ENCODE measurements at regions of chr6 and their contacts with region 1.

Region 1: DNA sequence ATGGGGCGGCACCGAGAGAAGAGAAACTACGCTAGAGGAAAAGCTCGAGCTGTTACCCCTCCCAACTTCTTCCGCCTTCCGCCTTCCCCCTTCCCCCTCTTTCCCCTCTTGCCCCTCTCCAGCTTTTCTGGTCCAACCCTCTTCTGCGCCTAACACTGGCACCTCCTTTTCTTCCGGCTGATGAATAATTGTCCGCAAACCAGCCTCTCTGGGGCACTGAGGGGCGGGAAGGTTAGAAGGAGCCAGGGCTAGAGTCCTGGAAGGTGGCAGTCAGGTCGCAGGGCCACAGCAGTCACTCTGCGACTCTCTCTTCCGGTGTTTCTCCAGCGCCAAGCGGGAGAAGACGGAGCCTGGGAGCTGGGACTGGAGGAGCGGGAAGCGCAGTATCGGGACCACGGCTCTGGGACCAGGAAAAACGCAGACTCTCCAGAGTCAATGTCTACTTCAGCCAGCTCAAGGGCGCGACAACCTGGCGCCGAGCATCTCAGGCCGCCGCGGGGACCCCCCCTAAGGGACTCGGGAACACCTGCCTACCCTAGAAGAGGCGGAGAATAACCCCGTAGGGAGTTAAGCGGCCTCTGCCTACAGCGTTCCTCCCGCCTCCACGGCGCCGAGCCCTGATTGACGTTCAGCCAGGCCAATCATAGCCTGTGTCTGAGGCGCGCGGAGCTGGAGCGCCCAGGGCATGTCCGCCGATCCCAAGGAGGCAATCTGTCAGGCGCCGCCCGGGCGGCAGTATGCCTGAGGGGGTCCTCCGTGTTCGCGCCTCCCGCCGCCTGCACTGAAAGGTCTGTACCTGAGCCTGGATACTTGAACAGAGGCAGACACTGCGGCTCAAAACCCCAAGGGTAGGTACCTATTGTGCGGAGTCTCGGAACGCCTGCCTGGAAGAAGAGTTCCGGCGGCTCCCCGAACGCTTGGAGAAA is 40.4 kb downstream of the PSMB9 start:
- DNase-seq: peak; percentile 88 to 97 (median 94)
- ATAC-seq: peak; percentile 98
- H3K4me3 ChIP-seq: peak overlapping the region; percentile 89
- H3K4me3 Mint-ChIP-seq: peak overlapping the region; percentile 100
- H3K27ac ChIP-seq: peak overlapping the region; percentile 75 to 85
- H3K27ac Mint-ChIP-seq: peak overlapping the region; percentile 91
- H3K4me1 ChIP-seq: peaks cover 22% of the 10 kb centered on the region
- H3K4me1 Mint-ChIP-seq: peaks cover 45% of the 10 kb centered on the region
- H3K27me3 ChIP-seq: no peaks in the 10 kb centered on the region
- H3K27me3 Mint-ChIP-seq: no peaks in the 10 kb centered on the region
- CTCF ChIP-seq: no peak

Region 2: GRCh38 chr6:32838114-32838958 is 56.0 kb before region 1 on chr6 and contains the start of gene TAP2:
- CTCF ChIA-PET with region 1: interaction called, 8 read pairs
- POLR2A ChIA-PET with region 1: interaction called, 13 read pairs
- intact Hi-C with region 1: no loop called
- DNase-seq: peak; percentile 93 to 99 (median 98)
- ATAC-seq: peak; percentile 86
- H3K4me3 ChIP-seq: peak within 1 kb of the TSS; percentile 77
- H3K4me3 Mint-ChIP-seq: peak within 1 kb of the TSS; percentile 97
- H3K27ac ChIP-seq: peak within 1 kb of the TSS; percentile 76 to 87
- H3K27ac Mint-ChIP-seq: peak within 1 kb of the TSS; percentile 99
- H3K4me1 ChIP-seq: peaks cover 67% of the 10 kb centered on the region
- H3K4me1 Mint-ChIP-seq: peaks cover 94% of the 10 kb centered on the region
- H3K27me3 ChIP-seq: no peaks in the 10 kb centered on the region
- H3K27me3 Mint-ChIP-seq: no peaks in the 10 kb centered on the region
- CTCF ChIP-seq: peak; percentile 93
- total RNA-seq, gene TAP2: 165 to 171 TPM

Region 3: GRCh38 chr6:32853541-32854375 is 40.6 kb before region 1 on chr6 and contains the starts of genes PSMB9 and TAP1:
- CTCF ChIA-PET with region 1: no interaction called
- POLR2A ChIA-PET with region 1: interaction called, 11 read pairs
- intact Hi-C with region 1: no loop called
- DNase-seq: peak; percentile 88 to 98 (median 94)
- ATAC-seq: peak; percentile 81
- H3K4me3 ChIP-seq: peak within 1 kb of the TSS; percentile 94
- H3K4me3 Mint-ChIP-seq: peak within 1 kb of the TSS; percentile 98
- H3K27ac ChIP-seq: peak within 1 kb of the TSS; percentile 98 to 100
- H3K27ac Mint-ChIP-seq: peak within 1 kb of the TSS; percentile 99
- H3K4me1 ChIP-seq: peaks cover 77% of the 10 kb centered on the region
- H3K4me1 Mint-ChIP-seq: peaks cover 86% of the 10 kb centered on the region
- H3K27me3 ChIP-seq: no peaks in the 10 kb centered on the region
- H3K27me3 Mint-ChIP-seq: no peaks in the 10 kb centered on the region
- CTCF ChIP-seq: peak; percentile 97
- total RNA-seq, gene PSMB9: 37.2 to 38.4 TPM
- total RNA-seq, gene TAP1: 91.5 to 93.9 TPM

Region 4: GRCh38 chr6:32908897-32909296 is 14.6 kb after region 1 on chr6:
- CTCF ChIA-PET with region 1: no interaction called
- POLR2A ChIA-PET with region 1: no interaction called
- intact Hi-C with region 1: no loop called
- DNase-seq: no peak
- ATAC-seq: no peak
- H3K4me3 ChIP-seq: no peak overlapping the region
- H3K4me3 Mint-ChIP-seq: no peak overlapping the region
- H3K27ac ChIP-seq: no peak overlapping the region
- H3K27ac Mint-ChIP-seq: no peak overlapping the region
- H3K4me1 ChIP-seq: no peaks in the 10 kb centered on the region
- H3K4me1 Mint-ChIP-seq: no peaks in the 10 kb centered on the region
- H3K27me3 ChIP-seq: peaks cover 0 to 5% of the 10 kb centered on the region in 2 experiments
- H3K27me3 Mint-ChIP-seq: peaks cover 23% of the 10 kb centered on the region
- CTCF ChIP-seq: no peak

Region 5: DNA sequence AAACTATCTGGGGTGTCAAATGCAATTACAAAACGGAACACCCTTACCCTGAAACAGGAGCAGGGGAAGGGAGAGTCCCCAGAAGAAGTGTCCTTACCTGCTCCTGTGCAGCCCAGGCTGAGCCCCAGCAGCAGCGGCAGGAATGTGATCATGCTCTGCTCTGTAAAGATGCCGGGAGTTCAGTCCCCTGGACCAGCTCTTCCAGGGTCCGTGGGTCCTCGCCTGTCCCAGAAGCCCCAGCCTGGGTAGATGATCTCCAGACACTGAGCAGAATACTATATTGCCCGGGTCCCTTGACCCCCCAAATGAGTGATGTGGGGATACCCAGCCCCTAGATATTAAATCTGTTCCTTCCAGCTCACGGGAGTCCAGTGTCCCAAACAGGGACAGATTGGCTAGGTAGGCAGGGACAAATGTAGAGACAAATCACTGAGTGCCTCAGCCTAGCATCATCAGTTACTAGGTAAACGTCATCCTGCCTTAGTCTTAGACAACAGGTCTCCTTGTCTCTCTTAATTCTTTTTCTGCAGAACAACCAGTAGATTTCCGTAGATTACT is 46.4 kb after region 1 on chr6 and contains the start of gene HLA-DMB:
- CTCF ChIA-PET with region 1: no interaction called
- POLR2A ChIA-PET with region 1: interaction called, 15 read pairs
- intact Hi-C with region 1: no loop called
- DNase-seq: peak in 10 of 14 experiments; percentile 15 to 89 (median 42)
- ATAC-seq: peak; percentile 85
- H3K4me3 ChIP-seq: peak within 1 kb of the TSS; percentile 72
- H3K4me3 Mint-ChIP-seq: peak within 1 kb of the TSS; percentile 96
- H3K27ac ChIP-seq: peak within 1 kb of the TSS; percentile 86 to 89
- H3K27ac Mint-ChIP-seq: peak within 1 kb of the TSS; percentile 99
- H3K4me1 ChIP-seq: peaks cover 58% of the 10 kb centered on the region
- H3K4me1 Mint-ChIP-seq: peaks cover 60% of the 10 kb centered on the region
- H3K27me3 ChIP-seq: no peaks in the 10 kb centered on the region
- H3K27me3 Mint-ChIP-seq: no peaks in the 10 kb centered on the region
- CTCF ChIP-seq: no peak
- total RNA-seq, gene HLA-DMB: 4.6 to 6.0 TPM

Region 6: GRCh38 chr6:32947552-32948465 is 53.5 kb after region 1 on chr6:
- CTCF ChIA-PET with region 1: interaction called, 6 read pairs
- POLR2A ChIA-PET with region 1: interaction called, 14 read pairs
- intact Hi-C with region 1: loop called in 1 of 2 experiments (anchors 2 kb)
- DNase-seq: peak in 11 of 14 experiments; percentile 19 to 79 (median 32)
- ATAC-seq: peak; percentile 33
- H3K4me3 ChIP-seq: no peak overlapping the region
- H3K4me3 Mint-ChIP-seq: no peak overlapping the region
- H3K27ac ChIP-seq: no peak overlapping the region
- H3K27ac Mint-ChIP-seq: no peak overlapping the region
- H3K4me1 ChIP-seq: peaks cover 43% of the 10 kb centered on the region
- H3K4me1 Mint-ChIP-seq: peaks cover 72% of the 10 kb centered on the region
- H3K27me3 ChIP-seq: no peaks in the 10 kb centered on the region
- H3K27me3 Mint-ChIP-seq: no peaks in the 10 kb centered on the region
- CTCF ChIP-seq: peak; percentile 77

Region 7: DNA sequence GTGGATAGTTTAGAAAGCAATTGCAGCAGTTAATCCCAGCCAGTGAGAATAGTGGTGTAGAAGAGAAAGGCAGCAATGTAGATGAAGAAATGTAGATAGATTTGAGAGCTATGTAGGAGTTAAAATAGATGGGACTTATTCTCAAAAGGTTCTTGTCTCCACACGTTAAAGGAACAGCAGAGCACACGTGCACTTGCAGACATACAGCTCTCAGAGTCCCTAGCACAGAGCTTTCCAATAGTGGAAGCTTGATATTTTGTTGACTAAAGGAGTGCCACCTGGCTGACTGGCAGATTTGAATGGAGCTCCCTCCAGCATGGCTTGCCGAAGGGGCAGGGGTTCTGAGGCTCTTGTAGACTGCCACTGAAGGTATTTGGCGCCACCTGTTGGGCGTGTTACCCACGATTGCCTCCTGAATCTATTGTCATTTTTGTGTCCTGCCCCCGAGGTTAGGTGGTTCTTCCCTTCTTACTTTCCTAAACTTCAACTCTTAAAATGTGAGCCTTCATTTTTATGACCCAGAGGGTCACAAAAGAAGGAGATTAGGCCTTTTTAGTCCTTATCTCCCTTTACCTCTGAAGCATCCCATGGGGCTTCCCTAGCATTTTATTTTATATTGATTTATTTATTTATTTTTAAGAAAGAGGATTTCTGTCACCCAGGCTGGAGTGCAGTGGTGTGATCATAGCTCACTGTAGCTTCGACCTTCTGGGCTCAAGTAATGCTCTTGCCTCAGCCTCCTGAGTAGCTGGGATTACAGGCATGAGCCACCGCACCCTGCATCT is 90.5 kb after region 1 on chr6:
- CTCF ChIA-PET with region 1: interaction called, 6 read pairs
- POLR2A ChIA-PET with region 1: interaction called, 15 read pairs
- intact Hi-C with region 1: loop called in 1 of 2 experiments (anchors 2 kb)
- DNase-seq: peak; percentile 83 to 97 (median 89)
- ATAC-seq: peak; percentile 98
- H3K4me3 ChIP-seq: no peak overlapping the region
- H3K4me3 Mint-ChIP-seq: no peak overlapping the region
- H3K27ac ChIP-seq: no peak overlapping the region
- H3K27ac Mint-ChIP-seq: peak overlapping the region; percentile 43
- H3K4me1 ChIP-seq: peaks cover 18% of the 10 kb centered on the region
- H3K4me1 Mint-ChIP-seq: peaks cover 28% of the 10 kb centered on the region
- H3K27me3 ChIP-seq: no peaks in the 10 kb centered on the region
- H3K27me3 Mint-ChIP-seq: no peaks in the 10 kb centered on the region
- CTCF ChIP-seq: peak; percentile 83

Region 8: DNA sequence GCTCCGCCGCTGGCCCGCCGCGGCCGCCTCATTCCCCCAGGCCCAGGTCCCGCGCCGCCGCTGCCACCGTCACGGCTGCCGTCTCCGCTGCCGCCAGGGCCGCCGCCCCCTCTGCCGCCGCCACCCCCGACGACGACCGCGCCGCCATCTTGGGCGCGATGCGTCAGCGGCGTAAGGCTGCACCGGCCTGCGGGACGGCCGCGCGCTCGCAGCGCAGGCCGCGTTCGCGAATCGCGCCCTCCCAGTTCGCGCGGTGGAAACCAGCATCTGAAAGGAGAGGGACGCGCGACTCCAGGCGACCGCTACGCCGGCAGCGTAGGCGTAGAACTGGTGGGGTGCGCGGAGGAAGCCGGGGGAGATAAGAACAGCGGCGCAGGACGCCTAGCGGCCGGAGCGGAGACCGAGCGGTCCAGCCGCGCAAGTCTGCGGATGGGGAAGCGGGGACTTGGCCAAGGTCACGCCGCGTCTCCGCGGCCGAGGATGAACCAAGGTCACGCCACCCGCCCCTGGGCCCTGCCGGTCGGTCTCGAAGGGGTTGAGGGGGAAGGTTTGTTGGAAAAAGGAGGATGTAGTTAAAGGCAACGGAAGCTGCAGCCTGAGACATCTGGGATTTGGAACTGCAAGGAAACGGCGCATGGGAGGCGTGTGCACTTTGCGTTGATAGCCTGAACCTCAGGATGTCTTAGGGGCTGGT is 1498.3 kb after region 1 on chr6 and contains the start of gene NUDT3:
- CTCF ChIA-PET with region 1: no interaction called
- POLR2A ChIA-PET with region 1: no interaction called
- intact Hi-C with region 1: loop called in 1 of 2 experiments (anchors 10 kb)
- DNase-seq: peak; percentile 86 to 98 (median 92)
- ATAC-seq: peak; percentile 87
- H3K4me3 ChIP-seq: peak within 1 kb of the TSS; percentile 83
- H3K4me3 Mint-ChIP-seq: peak within 1 kb of the TSS; percentile 96
- H3K27ac ChIP-seq: peak within 1 kb of the TSS; percentile 41 to 87
- H3K27ac Mint-ChIP-seq: no peak within 1 kb of the TSS
- H3K4me1 ChIP-seq: peaks cover 29% of the 10 kb centered on the region
- H3K4me1 Mint-ChIP-seq: peaks cover 31% of the 10 kb centered on the region
- H3K27me3 ChIP-seq: no peaks in the 10 kb centered on the region
- H3K27me3 Mint-ChIP-seq: no peaks in the 10 kb centered on the region
- CTCF ChIP-seq: peak; percentile 89
- total RNA-seq, gene NUDT3: 14.8 to 15.0 TPM

Measured in CD4-positive, alpha-beta T cell (primary cell).